ENCODE measurements at regions of chr1 and their contacts with region 1.

Region 1: DNA sequence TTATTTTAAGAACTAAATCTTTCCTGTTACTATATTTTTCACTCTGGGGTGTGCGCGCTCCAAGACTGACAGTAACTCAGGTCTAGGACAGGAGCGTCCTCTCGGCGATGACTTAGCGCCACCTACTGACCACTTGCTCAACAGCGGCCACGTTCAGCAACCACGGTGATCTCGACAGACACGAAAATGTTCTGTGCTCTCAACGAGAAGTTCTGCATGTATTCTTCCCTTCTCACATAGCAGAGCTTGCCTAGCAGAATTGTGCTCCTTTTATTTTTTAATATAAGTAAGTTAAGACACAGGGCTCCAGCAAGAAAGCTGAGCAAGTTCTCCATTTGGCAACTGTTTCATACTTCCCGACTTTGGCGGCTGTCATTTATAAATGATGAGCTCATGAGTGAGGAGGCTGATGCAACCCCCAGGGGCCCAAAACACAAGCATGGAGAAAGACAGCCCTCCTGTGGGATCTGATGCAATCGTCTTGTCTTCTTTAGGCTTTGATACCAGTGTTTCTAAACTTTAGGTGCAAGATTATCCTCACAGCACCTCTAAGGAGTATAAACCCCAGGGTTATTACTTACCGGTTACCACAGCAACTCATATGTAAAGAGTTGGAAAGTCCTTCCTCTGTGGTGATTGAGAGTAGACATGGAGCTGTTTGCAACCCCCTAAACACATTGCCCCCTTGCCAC is 92.6 kb downstream of the HHIPL2 start:
- DNase-seq: peak; percentile 69
- H3K4me3 Mint-ChIP-seq: no peak overlapping the region
- H3K27ac Mint-ChIP-seq: no peak overlapping the region
- H3K4me1 Mint-ChIP-seq: peaks cover 12% of the 10 kb centered on the region
- H3K27me3 Mint-ChIP-seq: peaks cover 3% of the 10 kb centered on the region

Region 2: GRCh38 chr1:220810179-220810653 is 1645.1 kb before region 1 on chr1:
- intact Hi-C with region 1: loop called (anchors 2 kb)
- DNase-seq: peak; percentile 55
- H3K4me3 Mint-ChIP-seq: no peak overlapping the region
- H3K27ac Mint-ChIP-seq: no peak overlapping the region
- H3K4me1 Mint-ChIP-seq: peaks cover 9% of the 10 kb centered on the region
- H3K27me3 Mint-ChIP-seq: peaks cover 8% of the 10 kb centered on the region

Region 3: DNA sequence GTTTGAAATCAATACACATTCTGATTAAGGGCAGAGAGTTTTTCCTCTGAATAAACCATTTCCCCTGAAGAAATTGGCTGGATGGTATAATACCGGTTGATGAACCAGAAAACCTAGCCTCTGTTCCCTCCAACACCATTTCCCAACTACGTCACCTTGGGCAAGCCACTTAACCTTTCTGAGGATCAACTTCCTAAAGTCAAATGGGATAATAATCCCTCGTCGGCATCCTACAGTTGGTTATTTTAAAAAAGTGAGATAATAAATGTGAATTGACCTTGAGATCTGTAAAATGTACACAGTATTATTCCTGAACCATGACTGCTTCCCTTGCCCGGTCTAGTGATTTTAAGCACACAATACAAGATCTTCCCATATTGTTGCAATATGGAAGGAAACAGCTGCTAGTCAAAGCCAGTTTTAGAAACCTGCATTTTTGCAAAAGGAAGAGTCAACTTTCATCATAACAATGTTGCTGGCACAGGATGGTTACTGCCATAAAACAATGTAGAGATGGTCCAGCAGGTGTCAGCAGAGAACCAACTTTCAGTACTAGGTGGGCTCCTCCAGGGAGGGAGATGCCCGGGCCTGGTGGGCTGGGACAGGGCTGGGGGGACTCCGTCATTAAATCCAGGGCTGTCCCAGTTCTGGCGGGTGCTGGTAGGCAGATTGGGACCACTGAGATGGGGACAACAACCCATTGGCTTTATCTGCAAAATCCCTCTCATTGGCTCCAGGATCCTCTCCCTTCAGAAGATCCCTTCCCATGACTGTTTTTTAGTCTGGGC is 1581.3 kb before region 1 on chr1:
- intact Hi-C with region 1: loop called (anchors 5 kb)
- DNase-seq: no peak
- H3K4me3 Mint-ChIP-seq: no peak overlapping the region
- H3K27ac Mint-ChIP-seq: no peak overlapping the region
- H3K4me1 Mint-ChIP-seq: peaks cover 22% of the 10 kb centered on the region
- H3K27me3 Mint-ChIP-seq: peaks cover 58% of the 10 kb centered on the region

Region 4: GRCh38 chr1:221263831-221264767 is 1191.2 kb before region 1 on chr1:
- intact Hi-C with region 1: loop called (anchors 1 kb)
- DNase-seq: peak; percentile 1
- H3K4me3 Mint-ChIP-seq: no peak overlapping the region
- H3K27ac Mint-ChIP-seq: no peak overlapping the region
- H3K4me1 Mint-ChIP-seq: no peaks in the 10 kb centered on the region
- H3K27me3 Mint-ChIP-seq: peaks cover 2% of the 10 kb centered on the region

Region 5: GRCh38 chr1:221478050-221478949 is 977.0 kb before region 1 on chr1:
- intact Hi-C with region 1: loop called (anchors 1 kb)
- DNase-seq: peak; percentile 31
- H3K4me3 Mint-ChIP-seq: no peak overlapping the region
- H3K27ac Mint-ChIP-seq: no peak overlapping the region
- H3K4me1 Mint-ChIP-seq: peaks cover 5% of the 10 kb centered on the region
- H3K27me3 Mint-ChIP-seq: peaks cover 5% of the 10 kb centered on the region

Region 6: GRCh38 chr1:221878134-221878533 is 577.2 kb before region 1 on chr1:
- intact Hi-C with region 1: loop called (anchors 10 kb)
- DNase-seq: no peak
- H3K4me3 Mint-ChIP-seq: no peak overlapping the region
- H3K27ac Mint-ChIP-seq: no peak overlapping the region
- H3K4me1 Mint-ChIP-seq: peaks cover 11% of the 10 kb centered on the region
- H3K27me3 Mint-ChIP-seq: peaks cover 5% of the 10 kb centered on the region

Region 7: GRCh38 chr1:222095606-222096475 is 359.5 kb before region 1 on chr1:
- intact Hi-C with region 1: loop called (anchors 1 kb)
- DNase-seq: peak; percentile 25
- H3K4me3 Mint-ChIP-seq: no peak overlapping the region
- H3K27ac Mint-ChIP-seq: no peak overlapping the region
- H3K4me1 Mint-ChIP-seq: no peaks in the 10 kb centered on the region
- H3K27me3 Mint-ChIP-seq: no peaks in the 10 kb centered on the region